ENCODE measurements at regions of chr12 and their contacts with region 1.

Region 1: GRCh38 chr12:47085815-47086252 is 6.1 kb upstream of the AMIGO2 start:
- DNase-seq: peak; percentile 63
- H3K4me3 Mint-ChIP-seq: no peak overlapping the region
- H3K27ac Mint-ChIP-seq: peak overlapping the region; percentile 41
- H3K4me1 Mint-ChIP-seq: peaks cover 54% of the 10 kb centered on the region
- H3K27me3 Mint-ChIP-seq: no peaks in the 10 kb centered on the region

Region 2: DNA sequence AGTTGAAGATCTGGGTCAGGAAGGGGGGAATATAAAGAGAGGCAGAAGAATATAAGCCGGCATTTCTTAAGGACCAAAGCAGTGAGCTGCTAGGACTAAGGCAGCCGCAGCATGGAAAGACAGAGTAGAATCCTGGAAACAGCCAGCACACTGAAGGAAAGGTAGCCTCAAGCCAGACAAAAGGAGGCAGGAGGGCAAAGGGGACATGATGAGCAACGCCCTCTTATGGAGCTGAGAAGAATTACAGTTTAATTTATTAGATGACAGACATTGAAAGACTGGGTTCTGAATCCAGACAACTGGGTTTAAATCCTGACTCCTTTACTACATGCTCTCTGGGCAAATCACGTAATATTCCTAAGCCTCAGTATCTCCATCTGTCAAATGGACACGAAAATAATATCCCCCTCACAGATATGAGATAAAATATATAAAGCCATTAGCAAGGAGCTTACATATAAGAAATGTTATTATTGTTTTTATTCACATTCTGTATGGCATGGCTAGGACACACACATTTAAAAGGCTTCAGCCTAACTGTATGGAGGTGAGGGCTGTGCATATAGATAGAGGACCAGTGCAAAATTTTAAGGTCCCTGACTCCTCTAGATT is 14.5 kb before region 1 on chr12:
- CTCF ChIA-PET with region 1: interaction called, 10 read pairs
- intact Hi-C with region 1: no loop called
- DNase-seq: peak; percentile 19
- H3K4me3 Mint-ChIP-seq: no peak overlapping the region
- H3K27ac Mint-ChIP-seq: no peak overlapping the region
- H3K4me1 Mint-ChIP-seq: peaks cover 26% of the 10 kb centered on the region
- H3K27me3 Mint-ChIP-seq: no peaks in the 10 kb centered on the region

Region 3: GRCh38 chr12:47121146-47121545 is 35.3 kb after region 1 on chr12:
- CTCF ChIA-PET with region 1: no interaction called
- intact Hi-C with region 1: loop called (anchors 1 kb)
- DNase-seq: no peak
- H3K4me3 Mint-ChIP-seq: no peak overlapping the region
- H3K27ac Mint-ChIP-seq: peak overlapping the region; percentile 79
- H3K4me1 Mint-ChIP-seq: peaks cover 41% of the 10 kb centered on the region
- H3K27me3 Mint-ChIP-seq: no peaks in the 10 kb centered on the region

Measured in activated naive CD4-positive, alpha-beta T cell treated with anti-CD3 and anti-CD28 coated beads for 36 hours (primary cell).